Mammary epithelial cell (primary cell): ENCODE measurements at regions of chr13 and their contacts with region 1.

Region 1: DNA sequence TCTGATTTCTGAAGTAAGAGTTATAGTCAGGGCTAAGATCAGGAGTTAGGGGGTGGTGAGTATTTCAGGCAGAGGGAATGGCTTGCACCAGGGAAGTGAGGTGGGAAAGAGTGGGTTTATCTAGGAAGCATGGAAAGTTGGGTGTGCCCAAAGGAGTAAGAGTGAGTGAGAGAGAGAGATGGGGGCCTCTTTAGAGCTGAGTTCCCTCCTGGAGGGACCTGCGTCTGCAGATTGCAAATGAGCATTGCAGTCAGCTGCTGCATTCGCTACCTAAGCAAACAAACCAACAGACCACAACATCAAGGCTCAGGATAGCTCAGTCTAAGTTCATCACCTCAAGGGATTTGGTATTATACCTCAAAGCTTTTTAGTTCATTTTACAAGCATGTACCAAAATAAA is 405.8 kb downstream of the FGF9 start:
- DNase-seq: no peak
- H3K4me3 ChIP-seq: no peak overlapping the region
- H3K27ac ChIP-seq: no peak overlapping the region
- H3K4me1 ChIP-seq: no peaks in the 10 kb centered on the region
- H3K27me3 ChIP-seq: no peaks in the 10 kb centered on the region
- CTCF ChIP-seq: no peak

Region 2: DNA sequence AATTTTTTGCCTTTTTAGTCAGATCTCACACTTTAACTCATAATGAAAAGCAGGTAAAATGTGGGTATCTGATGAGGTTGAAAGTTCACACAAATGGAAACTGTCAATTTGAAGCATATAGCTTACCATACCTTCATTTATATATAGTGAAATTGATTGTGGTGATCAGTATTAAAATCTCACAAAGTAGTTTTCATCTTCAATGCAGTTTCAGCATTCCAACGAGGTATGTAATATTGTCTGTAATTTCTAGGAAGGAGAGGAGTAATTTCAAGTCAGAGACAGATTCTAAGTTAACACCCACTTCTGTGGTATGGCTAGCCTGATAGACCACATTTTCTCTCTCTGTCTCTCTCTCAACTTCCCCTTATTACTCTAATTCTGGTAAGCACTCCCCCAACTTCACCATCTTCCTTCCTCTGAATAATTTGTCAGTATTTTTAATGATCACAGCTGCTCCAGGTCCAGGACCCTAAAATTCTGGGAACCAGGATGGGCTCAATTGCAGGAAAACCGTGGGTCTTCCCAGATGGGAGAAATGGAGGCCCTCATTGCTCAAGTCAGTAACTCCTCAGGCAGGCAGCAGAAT is 49.9 kb after region 1 on chr13:
- CTCF ChIA-PET with region 1: no interaction called
- dilution Hi-C with region 1: loop called (anchors 5 kb)
- in situ Hi-C with region 1: no loop called
- intact Hi-C with region 1: no loop called
- DNase-seq: no peak
- H3K4me3 ChIP-seq: no peak overlapping the region
- H3K27ac ChIP-seq: no peak overlapping the region
- H3K4me1 ChIP-seq: no peaks in the 10 kb centered on the region
- H3K27me3 ChIP-seq: no peaks in the 10 kb centered on the region
- CTCF ChIP-seq: no peak